AG04449 (cell line): ENCODE measurements at regions of chr1 and their contacts with region 1.

Region 1: GRCh38 chr1:151070474-151071276 is at the start of gene GABPB2:
- DNase-seq: peak; percentile 89
- H3K4me3 ChIP-seq: peak within 1 kb of the TSS; percentile 80
- CTCF ChIP-seq: peak; percentile 94

Region 2: GRCh38 chr1:151059078-151059907 is 11.4 kb before region 1 on chr1 and contains the start of gene CDC42SE1:
- CTCF ChIA-PET with region 1: interaction called, 31 read pairs
- POLR2A ChIA-PET with region 1: interaction called, 5 read pairs
- DNase-seq: peak; percentile 10
- H3K4me3 ChIP-seq: peak within 1 kb of the TSS; percentile 94
- CTCF ChIP-seq: peak; percentile 92

Region 3: GRCh38 chr1:151085953-151086559 is 15.4 kb after region 1 on chr1:
- CTCF ChIA-PET with region 1: interaction called, 44 read pairs
- POLR2A ChIA-PET with region 1: no interaction called
- DNase-seq: no peak
- H3K4me3 ChIP-seq: no peak overlapping the region
- CTCF ChIP-seq: no peak

Region 4: GRCh38 chr1:151165738-151166505 is 95.2 kb after region 1 on chr1 and contains the starts of genes LYSMD1 and SCNM1:
- CTCF ChIA-PET with region 1: interaction called, 12 read pairs
- POLR2A ChIA-PET with region 1: no interaction called
- DNase-seq: peak; percentile 95
- H3K4me3 ChIP-seq: peak within 1 kb of the TSS; percentile 99
- CTCF ChIP-seq: no peak

Region 5: GRCh38 chr1:151198255-151199127 is 127.8 kb after region 1 on chr1 and contains the start of gene PIP5K1A:
- CTCF ChIA-PET with region 1: no interaction called
- POLR2A ChIA-PET with region 1: no interaction called
- DNase-seq: peak; percentile 86
- H3K4me3 ChIP-seq: peak within 1 kb of the TSS; percentile 93
- CTCF ChIP-seq: no peak